H1 (cell line): ENCODE measurements at regions of chr12 and their contacts with region 1.

Region 1: DNA sequence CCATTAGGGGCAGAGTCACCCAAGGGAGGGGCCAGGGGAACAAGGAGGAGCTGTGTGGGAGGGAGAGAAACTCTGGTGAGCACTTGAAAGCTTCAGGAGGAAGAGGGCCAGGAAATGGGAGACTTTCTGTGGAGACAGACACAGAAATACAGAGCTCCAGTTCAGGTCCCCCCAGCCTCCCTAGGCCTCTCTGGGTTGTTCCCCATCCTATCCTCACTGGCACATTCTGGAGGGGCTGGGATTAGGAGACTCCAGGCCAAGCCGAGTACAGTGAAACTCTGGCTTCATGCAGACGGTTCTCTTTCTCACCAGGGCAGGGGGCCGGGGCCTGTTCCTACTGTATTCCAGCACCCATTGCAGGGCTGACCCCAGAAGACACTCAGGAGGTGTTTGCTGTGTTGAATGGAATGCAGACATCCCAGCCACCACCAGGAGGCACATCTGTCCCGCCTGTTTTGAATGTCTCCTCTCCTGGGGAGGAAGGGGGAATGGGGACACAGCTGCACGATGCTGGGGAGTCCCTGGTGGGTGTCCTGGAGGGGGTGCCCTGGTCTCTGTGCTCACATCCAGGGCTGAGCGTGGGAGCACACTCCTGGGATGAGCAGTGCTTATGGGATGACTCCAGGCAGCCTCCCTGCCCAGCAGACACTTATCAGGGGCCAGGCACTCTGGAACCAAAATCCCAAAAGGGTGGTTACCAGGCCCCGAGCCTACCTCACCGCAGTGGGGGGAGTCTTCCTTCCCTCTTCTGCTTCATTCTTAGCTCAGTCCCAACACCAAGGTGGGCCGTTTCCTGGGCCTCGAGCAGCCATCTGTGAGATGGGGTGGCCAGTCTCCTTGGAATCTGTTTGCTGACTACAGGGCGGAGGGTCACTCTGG is 5.5 kb upstream of the KRT84 start:
- DNase-seq: peak in 1 of 2 experiments; percentile 66
- H3K4me3 ChIP-seq: no peak overlapping the region
- H3K27ac ChIP-seq: no peak overlapping the region
- H3K4me1 ChIP-seq: peaks cover 0 to 7% (median 1%) of the 10 kb centered on the region in 4 experiments; a peak in 2 of 7 replicates
- H3K27me3 ChIP-seq: peaks cover 0 to 4% (median 0%) of the 10 kb centered on the region in 4 experiments; a peak in 1 of 7 replicates
- CTCF ChIP-seq: peak; percentile 83 to 91 (median 84)
- EP300 ChIP-seq: no peak
- POLR2A ChIP-seq: no peak
- RAD21 ChIP-seq: peak; percentile 73 to 74

Region 2: DNA sequence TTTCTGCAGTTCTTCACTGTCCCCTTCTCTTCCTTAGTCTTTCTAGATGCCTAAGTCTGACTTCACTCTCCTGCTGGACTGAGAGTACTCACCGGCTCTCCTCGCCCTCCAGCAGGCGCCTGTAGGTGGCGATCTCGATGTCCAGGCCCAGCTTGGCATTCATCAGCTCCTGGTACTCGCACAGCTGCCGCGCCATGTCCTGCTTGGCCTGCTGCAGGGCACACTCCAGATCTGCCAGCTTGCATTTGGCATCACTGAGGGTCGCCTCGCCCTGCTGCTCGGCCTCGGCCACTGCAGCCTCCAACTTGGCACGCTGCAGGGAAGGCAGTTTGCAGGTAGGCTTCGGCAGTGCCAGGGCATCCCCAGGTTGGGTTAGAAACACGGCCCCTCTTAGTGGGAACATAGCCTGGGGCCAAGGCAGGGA is 10.7 kb before region 1 on chr12:
- CTCF ChIA-PET with region 1: interaction called, 112 read pairs
- POLR2A ChIA-PET with region 1: no interaction called
- DNase-seq: peak in 1 of 2 experiments; percentile 67
- H3K4me3 ChIP-seq: no peak overlapping the region
- H3K27ac ChIP-seq: no peak overlapping the region
- H3K4me1 ChIP-seq: no peaks in the 10 kb centered on the region
- H3K27me3 ChIP-seq: no peaks in the 10 kb centered on the region
- CTCF ChIP-seq: peak; percentile 68 to 77 (median 69)
- EP300 ChIP-seq: no peak
- POLR2A ChIP-seq: no peak
- RAD21 ChIP-seq: peak; percentile 36 to 51; a peak in 3 of 4 replicates

Region 3: GRCh38 chr12:52440821-52441319 is 49.9 kb after region 1 on chr12:
- CTCF ChIA-PET with region 1: interaction called, 23 read pairs
- POLR2A ChIA-PET with region 1: no interaction called
- DNase-seq: no peak
- H3K4me3 ChIP-seq: no peak overlapping the region
- H3K27ac ChIP-seq: no peak overlapping the region
- H3K4me1 ChIP-seq: peaks cover 0 to 5% (median 3%) of the 10 kb centered on the region in 4 experiments; a peak in 3 of 7 replicates
- H3K27me3 ChIP-seq: no peaks in the 10 kb centered on the region; a peak in 2 of 7 replicates
- CTCF ChIP-seq: no peak
- EP300 ChIP-seq: no peak
- POLR2A ChIP-seq: no peak
- RAD21 ChIP-seq: no peak

Region 4: GRCh38 chr12:52522346-52523011 is 131.5 kb after region 1 on chr12:
- CTCF ChIA-PET with region 1: interaction called, 27 read pairs
- POLR2A ChIA-PET with region 1: no interaction called
- DNase-seq: peak in 1 of 2 experiments; percentile 27
- H3K4me3 ChIP-seq: no peak overlapping the region
- H3K27ac ChIP-seq: no peak overlapping the region
- H3K4me1 ChIP-seq: peaks cover 0 to 1% (median 0%) of the 10 kb centered on the region in 4 experiments; a peak in 1 of 7 replicates
- H3K27me3 ChIP-seq: no peaks in the 10 kb centered on the region; a peak in 1 of 7 replicates
- CTCF ChIP-seq: no peak
- EP300 ChIP-seq: no peak
- POLR2A ChIP-seq: no peak
- RAD21 ChIP-seq: no peak

Region 5: DNA sequence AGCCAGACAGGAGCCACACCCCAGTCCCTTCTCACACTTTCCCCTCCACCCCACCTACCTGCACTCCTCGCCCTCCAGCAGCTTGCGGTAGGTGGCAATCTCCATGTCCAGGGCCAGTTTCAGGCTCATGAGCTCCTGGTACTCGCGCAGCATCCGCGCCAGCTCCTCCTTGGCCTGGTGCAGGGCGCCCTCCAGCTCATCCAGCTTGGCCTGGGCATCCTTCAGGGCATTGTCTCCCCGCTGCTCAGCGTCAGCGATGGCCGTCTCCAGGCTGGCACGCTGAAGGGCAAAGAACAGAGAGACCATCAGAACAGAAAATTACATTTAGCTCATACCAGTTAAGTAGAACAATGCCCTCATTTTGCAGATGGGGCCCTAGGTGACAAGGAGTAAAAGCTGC is 177.1 kb after region 1 on chr12:
- CTCF ChIA-PET with region 1: interaction called, 24 read pairs
- POLR2A ChIA-PET with region 1: no interaction called
- DNase-seq: no peak
- H3K4me3 ChIP-seq: no peak overlapping the region
- H3K27ac ChIP-seq: no peak overlapping the region
- H3K4me1 ChIP-seq: no peaks in the 10 kb centered on the region
- H3K27me3 ChIP-seq: no peaks in the 10 kb centered on the region; a peak in 2 of 7 replicates
- CTCF ChIP-seq: no peak
- EP300 ChIP-seq: no peak
- POLR2A ChIP-seq: no peak
- RAD21 ChIP-seq: no peak

Region 6: GRCh38 chr12:52865090-52865944 is 474.3 kb after region 1 on chr12:
- CTCF ChIA-PET with region 1: interaction called, 11 read pairs
- POLR2A ChIA-PET with region 1: no interaction called
- DNase-seq: peak in 1 of 2 experiments; percentile 95
- H3K4me3 ChIP-seq: no peak overlapping the region
- H3K27ac ChIP-seq: no peak overlapping the region
- H3K4me1 ChIP-seq: no peaks in the 10 kb centered on the region; a peak in 1 of 7 replicates
- H3K27me3 ChIP-seq: no peaks in the 10 kb centered on the region; a peak in 1 of 7 replicates
- CTCF ChIP-seq: peak; percentile 84 to 95 (median 94)
- EP300 ChIP-seq: no peak
- POLR2A ChIP-seq: no peak
- RAD21 ChIP-seq: peak; percentile 91 to 92